Right ventricle myocardium inferior (tissue), 1 donor: ENCODE measurements at regions of chr5 and their contacts with region 1.

Region 1: DNA sequence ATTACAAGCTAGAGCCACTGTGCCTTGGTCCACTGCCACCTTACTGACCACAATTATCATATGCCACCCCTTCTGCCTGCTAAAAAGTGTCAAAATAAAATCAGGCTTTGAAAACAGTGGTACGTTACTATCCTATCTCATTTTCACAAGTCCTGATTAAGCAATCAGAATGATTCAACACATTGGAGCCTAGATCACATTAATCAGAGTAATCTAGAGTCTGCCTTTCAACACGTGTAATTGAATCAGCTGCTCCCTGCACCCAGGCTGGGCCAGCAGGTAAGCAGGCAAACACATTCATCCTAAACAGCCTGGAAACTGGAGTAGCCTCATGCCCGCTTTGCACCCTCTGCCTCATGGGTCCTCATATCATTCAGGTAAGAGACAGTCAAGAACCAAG is 186.2 kb downstream of the DCP2 start:
- DNase-seq: no peak
- ATAC-seq: no peak

Region 2: GRCh38 chr5:113090336-113091106 is 72.2 kb before region 1 on chr5:
- intact Hi-C with region 1: loop called (anchors 5 kb)
- DNase-seq: no peak
- ATAC-seq: peak; percentile 62